Activated CD4-positive, alpha-beta T cell treated with anti-CD3 and anti-CD28 coated beads, Interleukin-2, amount 10 ng/mL, durations not matched to agents 24 days and 14 days (primary cell): ENCODE measurements at regions of chr6 and their contacts with region 1.

Region 1: DNA sequence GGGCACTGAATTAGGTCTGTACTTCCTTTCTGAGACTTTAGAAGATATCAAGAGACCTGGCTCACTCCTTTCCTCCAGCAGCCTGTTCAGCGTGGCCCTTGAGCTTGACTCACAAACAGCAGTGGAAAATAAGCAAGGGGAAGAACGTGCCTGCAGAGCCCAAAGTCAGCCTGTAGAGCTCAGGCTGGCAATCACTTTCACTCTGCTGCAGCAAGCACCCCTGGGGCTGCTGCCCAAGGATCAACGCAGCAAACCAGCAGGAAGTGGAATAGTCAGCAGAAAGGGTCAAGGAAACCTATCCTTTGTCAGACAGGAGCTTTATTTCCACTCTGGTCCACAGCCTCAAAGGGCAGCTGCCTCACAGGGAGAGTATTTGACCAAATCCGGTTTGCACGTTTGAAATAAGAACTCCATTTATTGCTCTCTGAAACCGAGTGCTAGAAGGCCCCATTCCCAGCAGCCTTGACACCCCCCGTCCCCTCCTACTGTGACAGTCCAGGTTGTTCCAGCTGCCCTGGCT is 77.4 kb downstream of the PRDM1 start:
- DNase-seq: peak; percentile 88
- H3K4me3 Mint-ChIP-seq: peak overlapping the region; percentile 71
- H3K27ac Mint-ChIP-seq: peak overlapping the region; percentile 92
- H3K4me1 Mint-ChIP-seq: peaks cover 53% of the 10 kb centered on the region
- H3K27me3 Mint-ChIP-seq: no peaks in the 10 kb centered on the region

Region 2: DNA sequence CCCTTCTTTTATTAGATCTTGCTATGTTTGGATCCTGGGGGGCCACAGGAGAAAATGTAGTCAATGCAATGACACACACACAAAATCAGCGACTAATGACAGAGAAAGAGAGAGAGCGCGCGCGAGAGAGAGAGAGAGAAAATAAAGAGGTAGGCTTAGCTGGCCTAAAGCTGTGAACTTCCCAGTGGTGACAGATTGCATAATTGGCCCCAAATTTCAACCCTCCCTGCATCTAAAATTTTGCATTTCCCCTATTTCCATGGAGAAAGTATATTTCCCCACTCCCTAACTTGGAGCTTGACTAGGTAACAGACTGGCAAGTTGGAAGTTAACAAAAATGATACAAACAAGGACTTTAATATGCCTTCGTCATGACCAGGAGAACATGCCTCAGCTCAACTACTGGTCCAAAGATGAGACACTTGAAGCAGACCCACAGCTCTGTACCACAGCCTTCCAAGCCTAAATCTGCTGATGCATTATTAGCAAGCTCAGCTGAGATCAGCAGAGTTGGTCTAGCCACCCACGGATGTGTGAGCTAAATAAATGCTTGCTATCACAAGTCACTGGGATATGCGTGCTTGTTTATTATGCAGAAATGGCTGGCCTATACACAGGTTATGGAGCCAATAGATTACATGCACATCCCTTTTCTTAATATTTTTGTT is 195.5 kb before region 1 on chr6:
- intact Hi-C with region 1: no loop called
- DNase-seq: peak; percentile 48
- H3K4me3 Mint-ChIP-seq: no peak overlapping the region
- H3K27ac Mint-ChIP-seq: no peak overlapping the region
- H3K4me1 Mint-ChIP-seq: peaks cover 7% of the 10 kb centered on the region
- H3K27me3 Mint-ChIP-seq: peaks cover 4% of the 10 kb centered on the region

Region 3: DNA sequence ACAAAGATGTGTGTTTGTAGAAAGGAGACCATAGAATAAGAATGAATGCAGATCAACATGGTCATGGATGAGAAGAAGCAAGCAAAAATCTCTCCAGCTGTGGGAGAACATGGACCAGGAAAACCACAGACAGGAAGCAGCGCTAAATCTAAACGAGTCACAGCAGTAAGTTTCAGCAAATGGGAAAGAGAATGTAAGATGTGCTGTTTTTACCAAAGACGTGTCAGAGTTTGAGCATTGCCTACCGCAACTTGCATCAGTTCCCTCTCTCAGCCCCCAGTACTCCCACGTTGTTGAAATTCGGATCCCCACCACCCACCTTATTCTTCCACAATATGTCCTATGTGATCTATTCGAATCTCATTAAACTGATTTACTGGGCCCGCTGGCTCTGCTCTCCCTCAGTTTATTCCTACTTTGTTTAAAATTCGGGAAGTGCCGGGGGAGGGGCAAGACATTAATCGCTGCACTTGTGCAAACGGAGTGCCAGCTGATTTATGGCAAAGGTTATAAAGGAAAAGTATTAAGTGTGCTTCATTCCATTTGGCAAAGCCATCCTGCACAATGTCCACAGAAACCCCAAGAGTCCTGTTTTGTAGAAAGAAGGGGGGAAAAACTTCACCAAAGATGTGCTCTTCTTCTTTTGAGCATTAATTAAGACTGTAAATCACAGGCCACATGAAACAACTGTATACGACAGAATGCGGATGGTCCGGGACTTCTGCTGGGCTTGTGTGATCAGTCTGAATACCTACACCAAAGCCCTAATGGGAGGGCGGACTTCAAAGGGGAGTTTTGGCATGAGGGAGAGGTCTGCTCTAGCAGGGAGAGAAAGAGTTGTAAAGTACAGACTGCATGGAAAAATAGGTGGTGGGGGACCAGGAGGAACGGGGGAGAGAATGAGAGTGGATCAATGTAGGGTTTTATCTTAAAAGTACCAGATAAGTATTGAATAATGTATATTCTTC is 136.5 kb before region 1 on chr6:
- intact Hi-C with region 1: no loop called
- DNase-seq: no peak
- H3K4me3 Mint-ChIP-seq: peak overlapping the region; percentile 6
- H3K27ac Mint-ChIP-seq: no peak overlapping the region
- H3K4me1 Mint-ChIP-seq: peaks cover 14% of the 10 kb centered on the region
- H3K27me3 Mint-ChIP-seq: peaks cover 10% of the 10 kb centered on the region

Region 4: GRCh38 chr6:106114492-106115265 is 48.8 kb before region 1 on chr6:
- intact Hi-C with region 1: loop called (anchors 1 kb)
- DNase-seq: peak; percentile 81
- H3K4me3 Mint-ChIP-seq: peak overlapping the region; percentile 36
- H3K27ac Mint-ChIP-seq: peak overlapping the region; percentile 88
- H3K4me1 Mint-ChIP-seq: peaks cover 74% of the 10 kb centered on the region
- H3K27me3 Mint-ChIP-seq: no peaks in the 10 kb centered on the region

Region 5: DNA sequence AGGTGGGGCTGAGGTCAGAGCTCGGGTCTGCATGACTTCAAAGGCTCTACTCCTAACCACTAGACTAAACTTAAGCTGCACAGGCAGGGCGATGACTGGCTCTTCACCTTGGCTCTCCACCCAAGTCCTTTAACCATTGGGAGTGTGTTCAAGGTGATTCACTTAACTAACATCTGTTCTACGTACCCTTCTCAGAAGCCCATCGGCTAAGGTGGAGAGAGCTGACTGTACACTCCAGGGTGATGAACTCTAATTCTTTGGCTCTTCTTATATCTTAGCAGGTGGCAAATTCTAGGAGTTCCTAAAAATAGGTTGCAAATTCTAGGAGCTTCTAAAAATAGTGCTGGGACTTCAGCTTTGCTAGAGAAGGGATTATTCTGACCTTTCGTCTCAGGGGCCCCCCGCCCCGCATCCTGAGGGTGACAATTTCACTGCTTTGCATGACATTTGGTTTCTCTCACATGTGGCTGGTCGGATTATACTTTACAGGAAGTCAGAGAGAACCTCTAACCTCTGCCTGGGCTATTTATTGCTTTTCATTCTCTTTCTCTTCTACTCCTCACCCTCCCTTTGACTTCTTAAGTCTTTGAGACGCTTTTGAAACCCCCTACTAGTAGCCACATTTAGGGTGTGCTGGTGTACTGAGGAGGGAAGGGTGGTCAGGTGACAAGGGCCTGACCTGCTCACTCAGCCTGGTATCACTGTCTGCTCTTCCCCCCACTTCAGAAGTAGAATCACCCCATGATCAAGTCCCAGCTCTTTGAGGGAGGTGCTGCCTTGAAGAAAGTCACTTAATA is 21.9 kb before region 1 on chr6:
- intact Hi-C with region 1: loop called (anchors 1 kb)
- DNase-seq: peak; percentile 85
- H3K4me3 Mint-ChIP-seq: peak overlapping the region; percentile 76
- H3K27ac Mint-ChIP-seq: peak overlapping the region; percentile 96
- H3K4me1 Mint-ChIP-seq: peaks cover 51% of the 10 kb centered on the region
- H3K27me3 Mint-ChIP-seq: no peaks in the 10 kb centered on the region

Region 6: GRCh38 chr6:106184629-106185028 is 21.1 kb after region 1 on chr6:
- intact Hi-C with region 1: loop called (anchors 1 kb)
- DNase-seq: peak; percentile 49
- H3K4me3 Mint-ChIP-seq: no peak overlapping the region
- H3K27ac Mint-ChIP-seq: no peak overlapping the region
- H3K4me1 Mint-ChIP-seq: peaks cover 47% of the 10 kb centered on the region
- H3K27me3 Mint-ChIP-seq: no peaks in the 10 kb centered on the region